ENCODE measurements at regions of chr19 and their contacts with region 1.

Region 1: GRCh38 chr19:56525214-56525860 is 13.4 kb upstream of the ZFP28 start:
- DNase-seq: no peak
- ATAC-seq: no peak
- H3K4me3 ChIP-seq: no peak overlapping the region
- H3K27ac ChIP-seq: no peak overlapping the region
- H3K4me1 ChIP-seq: no peaks in the 10 kb centered on the region
- H3K27me3 ChIP-seq: no peaks in the 10 kb centered on the region
- CTCF ChIP-seq: no peak

Region 2: DNA sequence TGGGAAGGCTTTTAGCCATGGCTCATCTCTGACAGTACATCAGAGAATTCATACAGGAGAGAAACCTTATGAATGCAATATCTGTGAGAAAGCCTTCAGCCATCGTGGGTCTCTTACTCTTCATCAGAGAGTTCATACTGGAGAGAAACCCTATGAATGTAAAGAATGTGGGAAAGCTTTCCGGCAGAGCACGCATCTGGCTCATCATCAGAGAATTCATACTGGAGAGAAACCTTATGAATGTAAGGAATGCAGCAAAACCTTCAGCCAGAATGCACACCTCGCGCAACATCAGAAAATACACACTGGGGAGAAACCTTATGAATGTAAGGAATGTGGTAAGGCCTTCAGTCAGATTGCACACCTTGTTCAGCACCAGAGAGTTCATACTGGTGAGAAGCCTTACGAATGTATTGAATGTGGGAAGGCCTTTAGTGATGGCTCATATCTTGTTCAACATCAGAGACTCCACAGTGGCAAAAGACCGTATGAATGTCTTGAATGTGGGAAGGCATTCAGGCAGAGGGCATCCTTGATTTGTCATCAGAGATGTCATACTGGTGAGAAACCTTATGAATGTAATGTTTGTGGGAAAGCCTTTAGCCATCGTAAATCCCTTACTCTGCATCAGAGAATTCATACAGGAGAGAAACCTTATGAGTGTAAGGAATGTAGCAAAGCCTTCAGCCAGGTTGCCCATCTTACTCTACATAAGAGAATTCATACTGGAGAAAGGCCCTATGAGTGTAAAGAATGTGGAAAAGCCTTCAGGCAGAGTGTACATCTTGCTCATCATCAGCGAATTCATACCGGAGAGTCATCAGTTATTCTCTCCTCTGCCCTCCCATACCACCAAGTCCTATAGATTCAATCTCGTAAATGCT is 52.6 kb after region 1 on chr19:
- intact Hi-C with region 1: loop called in 1 of 10 experiments (anchors 10 kb)
- DNase-seq: no peak
- ATAC-seq: no peak
- H3K4me3 ChIP-seq: no peak overlapping the region
- H3K27ac ChIP-seq: no peak overlapping the region
- H3K4me1 ChIP-seq: no peaks in the 10 kb centered on the region
- H3K27me3 ChIP-seq: no peaks in the 10 kb centered on the region
- CTCF ChIP-seq: no peak

Measured in heart right ventricle (tissue), 16 donors.